ENCODE measurements at regions of chr4 and their contacts with region 1.

Region 1: DNA sequence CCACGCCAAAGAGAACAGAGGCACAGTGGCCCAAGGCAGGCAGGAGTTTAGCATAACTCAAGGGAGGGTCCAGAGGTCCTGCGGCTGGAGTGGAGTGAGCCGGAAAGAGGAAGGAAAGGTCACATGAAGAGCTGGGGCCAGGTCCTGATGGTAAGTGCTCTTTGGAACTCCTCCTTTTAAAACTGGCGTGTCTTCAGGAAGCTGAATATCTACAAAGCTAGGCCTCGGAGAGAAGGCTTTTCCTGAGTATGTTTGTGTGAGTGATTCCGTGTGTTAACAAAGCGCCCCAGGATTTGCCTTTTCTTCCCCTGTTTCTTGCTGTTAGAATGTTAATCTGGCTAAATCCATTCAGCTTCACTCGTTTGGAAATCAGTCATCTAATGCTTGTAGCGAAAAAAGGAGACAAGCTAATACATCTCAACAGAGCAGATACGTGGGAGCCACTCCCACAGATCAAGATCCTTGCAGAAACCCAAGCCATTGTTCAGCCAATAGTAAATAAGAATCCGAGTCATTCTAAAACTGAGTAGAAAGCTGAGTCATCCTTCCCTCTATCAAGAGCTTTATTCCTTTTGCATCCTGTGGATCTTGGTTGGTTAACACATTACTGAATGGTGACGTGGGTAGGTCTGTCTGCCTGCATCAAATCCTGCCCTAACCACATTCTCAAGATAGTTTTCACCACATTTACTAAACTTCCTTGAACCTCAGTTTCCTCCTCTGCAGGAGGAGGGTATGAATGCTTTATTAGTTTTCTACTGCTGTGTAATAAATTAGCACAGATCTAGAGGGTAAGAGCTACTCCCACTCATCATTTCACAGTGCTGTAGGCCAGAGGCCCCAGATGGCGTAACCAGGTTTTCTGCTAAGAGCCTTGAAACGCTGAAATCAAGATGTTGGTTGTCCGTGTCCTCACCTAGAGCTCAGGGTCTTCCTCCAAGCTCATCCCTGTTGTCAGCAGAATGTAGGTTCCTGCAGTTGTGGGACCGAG is 43.2 kb upstream of the RBM47 start:
- DNase-seq: peak; percentile 70 to 99
- H3K4me3 ChIP-seq: peak overlapping the region; percentile 56; the same call in 1 of the 2 replicates
- H3K27ac ChIP-seq: peak overlapping the region; percentile 100
- H3K4me1 ChIP-seq: peaks cover 66% of the 10 kb centered on the region
- H3K27me3 ChIP-seq: no peaks in the 10 kb centered on the region
- CTCF ChIP-seq: no peak

Region 2: DNA sequence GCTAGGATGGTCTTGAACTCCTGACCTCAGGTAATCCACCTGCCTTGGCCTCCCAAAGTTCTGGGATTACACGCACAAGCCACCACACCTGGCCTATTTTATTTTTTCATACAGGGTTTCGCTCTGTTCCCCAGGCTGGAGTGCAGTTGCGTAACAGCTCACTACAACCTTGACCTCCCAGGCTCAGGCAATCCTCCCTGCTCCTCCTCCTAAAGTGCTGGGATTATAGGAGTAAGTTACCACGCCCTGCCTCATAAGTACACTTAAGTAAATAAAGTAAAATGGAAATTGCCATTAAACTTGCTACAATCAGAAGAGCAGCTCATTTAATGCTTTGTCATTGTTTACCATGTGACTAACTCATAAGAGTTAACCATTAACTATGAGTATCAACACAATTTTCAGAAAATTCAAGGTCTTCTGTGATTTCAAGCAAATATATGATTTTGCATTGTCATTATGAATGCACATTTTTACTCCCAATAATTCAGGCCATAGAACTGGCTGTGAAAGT is 1157.9 kb before region 1 on chr4:
- CTCF ChIA-PET with region 1: interaction called, 10 read pairs
- POLR2A ChIA-PET with region 1: no interaction called
- intact Hi-C with region 1: no loop called
- DNase-seq: peak; percentile 61 to 97
- H3K4me3 ChIP-seq: no peak overlapping the region
- H3K27ac ChIP-seq: peak overlapping the region; percentile 100
- H3K4me1 ChIP-seq: peaks cover 36% of the 10 kb centered on the region
- H3K27me3 ChIP-seq: no peaks in the 10 kb centered on the region
- CTCF ChIP-seq: no peak

Region 3: DNA sequence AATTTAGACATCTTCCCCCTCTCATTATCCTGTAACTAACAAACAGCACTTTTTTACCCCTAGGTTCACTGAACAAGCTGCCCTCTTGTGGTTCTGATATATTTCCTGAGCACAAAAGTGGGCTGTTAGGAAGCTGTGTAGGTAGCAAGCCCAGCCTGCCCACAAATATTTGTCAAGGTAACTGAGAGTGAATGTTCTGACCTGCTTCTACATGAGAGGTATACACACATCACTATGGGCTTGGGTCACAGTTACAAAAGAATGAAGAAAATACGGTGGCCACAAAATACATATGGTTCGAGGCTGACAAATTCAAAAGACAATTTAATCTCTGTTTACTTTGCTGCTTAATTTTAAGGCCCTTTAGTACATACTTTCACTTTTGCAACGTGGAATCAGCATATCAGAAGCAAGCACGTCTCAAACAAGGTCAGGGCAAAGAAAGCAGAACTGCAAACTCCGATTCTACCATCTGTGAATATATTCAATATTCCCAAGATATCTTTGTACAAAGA is 121.8 kb before region 1 on chr4:
- CTCF ChIA-PET with region 1: no interaction called
- POLR2A ChIA-PET with region 1: no interaction called
- intact Hi-C with region 1: loop called (anchors 2 kb)
- DNase-seq: peak; percentile 31 to 56
- H3K4me3 ChIP-seq: no peak overlapping the region; the same call in 1 of the 2 replicates
- H3K27ac ChIP-seq: peak overlapping the region; percentile 65
- H3K4me1 ChIP-seq: peaks cover 51% of the 10 kb centered on the region
- H3K27me3 ChIP-seq: no peaks in the 10 kb centered on the region
- CTCF ChIP-seq: peak; percentile 42; the same call in 1 of the 2 replicates

Region 4: DNA sequence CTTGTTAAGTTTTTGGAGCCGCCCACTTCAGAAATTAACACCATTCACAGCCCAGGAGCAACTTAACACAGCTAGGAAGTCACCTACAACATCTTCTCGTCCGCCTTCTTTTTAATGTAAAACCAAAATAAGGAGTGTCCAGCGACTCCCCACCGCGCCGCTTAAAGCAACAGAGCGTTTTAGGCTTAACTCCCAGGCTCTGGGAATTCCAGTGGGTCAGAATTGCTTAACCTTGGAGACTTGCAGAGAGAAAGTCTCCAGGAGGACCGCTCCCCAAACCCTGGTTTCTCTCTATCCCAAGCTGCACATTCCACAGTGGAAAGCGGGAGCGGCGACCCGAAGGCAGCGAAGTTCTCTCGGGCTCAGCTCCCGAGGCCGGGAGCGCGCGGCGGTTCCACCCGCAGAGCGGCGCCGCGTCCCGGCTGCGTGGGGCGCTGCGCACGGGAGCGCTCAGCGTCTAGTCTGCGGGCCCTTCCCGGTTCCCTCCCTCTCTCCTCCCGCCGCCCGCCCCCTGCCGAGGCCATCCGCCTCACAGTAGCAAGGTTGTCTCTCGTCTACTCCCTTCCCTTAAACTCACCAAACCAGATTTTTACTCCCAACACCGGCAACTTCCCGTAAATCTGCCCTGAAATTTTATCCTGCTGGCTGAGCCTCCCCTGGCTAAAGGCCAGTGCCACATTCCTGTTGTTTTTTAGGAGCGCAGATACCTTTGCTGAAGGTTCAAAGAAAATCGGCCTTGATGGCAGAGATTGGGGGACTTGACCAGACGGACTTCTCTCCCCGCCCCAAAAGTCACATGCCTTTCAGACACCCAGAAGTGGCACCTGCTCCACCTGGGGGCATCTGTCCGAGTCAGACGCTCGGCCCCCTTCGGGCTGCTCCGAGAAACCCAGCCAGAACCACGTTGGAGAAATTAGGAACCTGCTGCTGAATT is 43.2 kb before region 1 on chr4 and contains the start of gene RBM47:
- CTCF ChIA-PET with region 1: interaction called, 4 read pairs
- POLR2A ChIA-PET with region 1: interaction called, 22 read pairs
- intact Hi-C with region 1: loop called (anchors 1 kb)
- DNase-seq: peak; percentile 89 to 94
- H3K4me3 ChIP-seq: peak within 1 kb of the TSS; percentile 96
- H3K27ac ChIP-seq: peak within 1 kb of the TSS; percentile 99
- H3K4me1 ChIP-seq: peaks cover 44% of the 10 kb centered on the region
- H3K27me3 ChIP-seq: no peaks in the 10 kb centered on the region
- CTCF ChIP-seq: no peak; the same call in 1 of the 2 replicates
- total RNA-seq, gene RBM47: 78.0 and 79.0 TPM in 2 replicates

Region 5: DNA sequence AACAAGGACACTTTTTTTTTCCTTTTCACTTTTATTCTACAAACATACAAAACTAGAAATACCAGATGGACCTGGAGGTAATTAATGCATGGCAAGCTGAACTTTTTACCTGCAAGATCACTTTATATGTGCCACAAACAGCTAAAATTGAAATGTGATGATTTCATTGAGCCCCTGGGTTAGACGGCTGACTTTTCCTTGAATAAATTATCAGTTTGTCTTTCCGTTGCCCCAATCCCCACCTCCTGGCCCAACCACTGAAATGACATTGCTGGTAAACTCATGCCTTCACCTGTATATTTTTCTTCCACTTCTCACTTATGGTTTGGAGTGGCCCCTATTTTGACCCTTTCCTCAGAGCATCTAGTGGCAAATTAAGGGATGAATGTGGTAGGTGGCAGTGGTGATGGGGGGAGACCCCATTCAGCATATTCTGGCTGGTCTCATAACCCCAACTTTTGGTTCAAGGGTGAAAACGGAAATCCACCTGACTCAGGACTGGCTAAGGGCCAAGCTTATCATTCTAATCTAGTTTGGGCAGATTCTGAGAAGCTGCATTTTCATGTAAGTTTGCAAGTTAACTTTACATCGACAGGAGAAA is 29.8 kb after region 1 on chr4:
- CTCF ChIA-PET with region 1: interaction called, 3 read pairs
- POLR2A ChIA-PET with region 1: interaction called, 10 read pairs
- intact Hi-C with region 1: loop called (anchors 1 kb)
- DNase-seq: peak; percentile 51 to 87
- H3K4me3 ChIP-seq: peak overlapping the region; percentile 27; the same call in 1 of the 2 replicates
- H3K27ac ChIP-seq: peak overlapping the region; percentile 94
- H3K4me1 ChIP-seq: peaks cover 67% of the 10 kb centered on the region
- H3K27me3 ChIP-seq: no peaks in the 10 kb centered on the region
- CTCF ChIP-seq: no peak

Measured in PC-9 (cell line).